Stomach (tissue), 19 donors: ENCODE measurements at regions of chr7 and their contacts with region 1.

Region 1: DNA sequence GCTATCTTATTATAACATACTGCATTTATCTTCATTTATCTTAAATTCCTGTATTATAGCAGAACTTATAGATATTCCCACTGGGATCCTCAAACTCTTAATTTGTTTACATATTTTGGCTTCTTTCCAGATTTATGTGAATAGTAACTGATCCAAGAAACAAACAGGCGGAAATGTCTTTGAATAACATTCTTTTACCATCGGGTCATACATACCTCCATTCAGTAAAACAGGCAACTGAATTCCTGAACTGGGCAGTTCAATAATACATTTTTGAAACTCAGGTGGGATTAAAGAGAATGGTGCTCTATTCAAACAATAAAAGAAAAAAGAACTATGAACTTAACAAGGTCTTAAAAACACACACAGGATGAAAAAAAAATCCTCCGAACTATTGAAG is 337.4 kb downstream of the CRPPA start:
- DNase-seq: no peak
- H3K4me3 ChIP-seq: no peak overlapping the region
- H3K27ac ChIP-seq: no peak overlapping the region
- H3K4me1 ChIP-seq: no peaks in the 10 kb centered on the region
- H3K27me3 ChIP-seq: no peaks in the 10 kb centered on the region
- CTCF ChIP-seq: no peak
- EP300 ChIP-seq: no peak
- POLR2A ChIP-seq: no peak

Region 2: GRCh38 chr7:16564909-16565426 is 481.0 kb after region 1 on chr7:
- intact Hi-C with region 1: loop called (anchors 5 kb)
- DNase-seq: peak in 1 of 2 donors; percentile 80
- H3K4me3 ChIP-seq: no peak overlapping the region
- H3K27ac ChIP-seq: no peak overlapping the region
- H3K4me1 ChIP-seq: peaks cover 0 to 20% (median 0%) of the 10 kb centered on the region in 4 donors
- H3K27me3 ChIP-seq: no peaks in the 10 kb centered on the region
- CTCF ChIP-seq: peak in 5 of 7 experiments; percentile 37 to 72 (median 60)
- EP300 ChIP-seq: no peak
- POLR2A ChIP-seq: no peak